ENCODE measurements at regions of chr6 and their contacts with region 1.

Region 1: DNA sequence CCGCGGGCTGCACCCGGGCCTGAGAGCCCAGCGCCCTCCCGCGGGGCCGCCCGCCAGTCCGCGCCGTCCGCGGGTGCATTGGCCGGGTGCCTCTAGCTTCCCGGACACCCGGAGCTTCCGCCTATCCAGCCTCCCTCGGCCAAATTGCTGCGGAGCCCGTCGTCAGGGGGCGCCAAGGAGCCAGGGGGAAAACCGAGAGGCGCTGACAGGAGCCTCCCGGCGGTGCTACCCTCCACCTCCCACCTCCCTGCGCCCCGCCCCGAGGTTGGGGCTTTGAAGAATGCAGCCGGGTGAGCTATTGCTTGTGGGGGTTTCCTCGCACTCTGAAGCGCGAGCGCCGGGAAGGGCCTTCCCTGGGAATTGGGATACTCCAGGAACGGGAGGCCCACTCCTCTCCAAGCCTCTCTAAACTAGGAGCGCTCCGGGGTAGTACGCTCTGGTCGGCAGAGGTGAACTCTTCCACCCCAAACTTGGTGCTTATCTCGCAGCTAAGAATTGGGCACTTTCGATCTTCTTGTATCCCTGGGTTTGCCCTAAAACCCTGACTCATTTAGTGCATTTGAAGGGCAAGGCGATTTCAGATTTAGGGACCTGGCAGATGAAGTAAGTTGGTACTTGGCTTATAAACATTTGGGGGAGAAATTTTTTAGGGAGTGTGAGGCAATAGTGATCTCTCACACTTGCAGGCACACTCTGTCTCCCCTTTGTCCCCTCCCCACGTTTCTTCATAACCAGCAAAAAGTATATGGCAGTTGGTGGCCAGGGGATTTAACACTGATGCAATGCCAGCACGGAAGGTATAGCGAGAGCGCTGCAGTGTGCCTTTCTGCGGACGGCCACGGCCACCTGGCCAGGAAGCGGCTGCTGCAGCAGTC is 501 bp downstream of the BEND6 start:
- DNase-seq: peak in 7 of 9 donors; percentile 8 to 81 (median 19)
- ATAC-seq: peak; percentile 74
- H3K4me3 ChIP-seq: peak overlapping the region; percentile 37
- H3K4me3 Mint-ChIP-seq: peak overlapping the region; percentile 76 to 88 (median 80)
- H3K27ac ChIP-seq: no peak overlapping the region
- H3K27ac Mint-ChIP-seq: peak overlapping the region in 1 of 9 donors; percentile 30
- H3K4me1 ChIP-seq: peaks cover 6 to 16% of the 10 kb centered on the region in 2 donors
- H3K4me1 Mint-ChIP-seq: peaks cover 11 to 26% (median 24%) of the 10 kb centered on the region in 7 donors
- H3K27me3 ChIP-seq: peaks cover 0 to 12% of the 10 kb centered on the region in 2 donors
- H3K27me3 Mint-ChIP-seq: peaks cover 52 to 77% (median 69%) of the 10 kb centered on the region in 5 donors

Region 2: GRCh38 chr6:56902641-56903464 is 52.6 kb before region 1 on chr6:
- CTCF ChIA-PET with region 1: interaction called, 3 read pairs
- POLR2A ChIA-PET with region 1: no interaction called
- intact Hi-C with region 1: loop called in 1 of 2 experiments (anchors 2 kb)
- DNase-seq: peak in 6 of 9 donors; percentile 18 to 44 (median 28)
- ATAC-seq: peak; percentile 61
- H3K4me3 ChIP-seq: no peak overlapping the region
- H3K4me3 Mint-ChIP-seq: no peak overlapping the region
- H3K27ac ChIP-seq: no peak overlapping the region
- H3K27ac Mint-ChIP-seq: no peak overlapping the region
- H3K4me1 ChIP-seq: no peaks in the 10 kb centered on the region
- H3K4me1 Mint-ChIP-seq: no peaks in the 10 kb centered on the region
- H3K27me3 ChIP-seq: no peaks in the 10 kb centered on the region
- H3K27me3 Mint-ChIP-seq: peaks cover 4 to 26% (median 6%) of the 10 kb centered on the region in 5 donors

Region 3: DNA sequence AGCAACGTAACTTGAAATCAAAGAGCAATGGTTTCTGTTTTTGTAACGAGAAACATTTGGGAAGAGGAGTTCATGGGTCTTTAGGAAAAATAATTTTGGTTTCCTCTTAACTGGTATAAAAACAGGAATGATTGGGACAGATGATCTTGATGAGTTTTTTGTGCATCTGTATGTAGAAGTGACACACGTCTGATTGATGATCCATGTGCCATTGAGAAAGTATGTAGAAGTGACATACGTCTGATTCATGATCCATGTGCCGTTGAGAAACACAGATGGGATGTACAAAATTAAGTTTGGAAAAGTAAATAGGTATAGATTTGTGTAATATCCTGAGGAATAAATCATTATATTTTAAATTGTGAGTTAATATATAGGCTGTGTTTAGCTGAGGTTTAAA is 93.2 kb after region 1 on chr6:
- CTCF ChIA-PET with region 1: no interaction called
- POLR2A ChIA-PET with region 1: no interaction called
- intact Hi-C with region 1: loop called in 1 of 2 experiments (anchors 1 kb)
- DNase-seq: no peak
- ATAC-seq: no peak
- H3K4me3 ChIP-seq: no peak overlapping the region
- H3K4me3 Mint-ChIP-seq: peak overlapping the region; percentile 46 to 84 (median 68)
- H3K27ac ChIP-seq: no peak overlapping the region
- H3K27ac Mint-ChIP-seq: peak overlapping the region in 6 of 9 donors; percentile 14 to 75 (median 58)
- H3K4me1 ChIP-seq: peaks cover 0 to 9% of the 10 kb centered on the region in 2 donors
- H3K4me1 Mint-ChIP-seq: peaks cover 21 to 41% (median 32%) of the 10 kb centered on the region in 7 donors
- H3K27me3 ChIP-seq: no peaks in the 10 kb centered on the region
- H3K27me3 Mint-ChIP-seq: peaks cover 0 to 24% (median 0%) of the 10 kb centered on the region in 5 donors

Region 4: GRCh38 chr6:57108691-57109090 is 153.3 kb after region 1 on chr6:
- CTCF ChIA-PET with region 1: no interaction called
- POLR2A ChIA-PET with region 1: no interaction called
- intact Hi-C with region 1: no loop called
- DNase-seq: no peak
- ATAC-seq: no peak
- H3K4me3 ChIP-seq: no peak overlapping the region
- H3K4me3 Mint-ChIP-seq: no peak overlapping the region
- H3K27ac ChIP-seq: no peak overlapping the region
- H3K27ac Mint-ChIP-seq: peak overlapping the region in 1 of 9 donors; percentile 8
- H3K4me1 ChIP-seq: no peaks in the 10 kb centered on the region
- H3K4me1 Mint-ChIP-seq: peaks cover 31 to 69% (median 52%) of the 10 kb centered on the region in 7 donors
- H3K27me3 ChIP-seq: no peaks in the 10 kb centered on the region
- H3K27me3 Mint-ChIP-seq: no peaks in the 10 kb centered on the region

Region 5: DNA sequence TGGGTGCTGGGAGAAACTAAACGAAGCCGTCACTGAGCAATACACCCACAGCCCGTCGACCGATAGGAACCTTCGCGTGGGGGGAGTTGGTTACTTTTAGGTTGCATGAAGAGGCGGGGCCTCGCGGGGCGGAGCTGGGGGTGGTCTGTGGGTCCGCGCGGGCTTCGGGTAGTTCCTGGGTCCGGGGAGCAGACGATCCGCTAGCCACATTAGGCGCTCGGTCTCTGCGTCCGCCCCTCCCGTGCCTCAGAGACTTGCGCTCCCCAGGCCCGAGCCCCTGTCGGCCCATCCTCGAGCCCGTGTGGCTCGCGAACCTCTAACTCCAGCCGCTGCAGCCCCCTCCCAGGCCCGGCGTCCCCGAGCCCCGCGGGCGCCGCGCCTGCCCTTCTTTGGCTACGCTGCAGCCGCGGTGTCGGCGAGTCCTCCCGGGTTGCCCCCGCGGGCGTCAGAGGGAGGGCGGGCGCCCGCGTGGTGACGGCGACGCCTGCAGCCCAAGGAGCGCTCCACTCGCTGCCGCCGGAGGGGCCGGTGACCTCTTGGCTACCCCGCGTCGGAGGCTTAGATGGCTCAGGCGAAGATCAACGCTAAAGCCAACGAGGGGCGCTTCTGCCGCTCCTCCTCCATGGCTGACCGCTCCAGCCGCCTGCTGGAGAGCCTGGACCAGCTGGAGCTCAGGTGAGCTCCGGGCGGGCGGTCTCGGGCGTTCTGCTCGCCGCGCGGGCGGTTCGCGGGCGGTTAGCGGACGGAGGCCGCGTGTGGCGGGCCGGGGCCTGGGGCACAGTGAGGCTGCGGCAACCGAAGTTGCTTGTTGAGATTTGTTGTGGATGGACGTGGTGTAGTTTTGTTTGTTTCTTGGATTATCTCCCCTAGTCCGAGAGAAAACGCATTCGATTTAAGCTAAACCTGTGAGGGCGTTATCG is 217.0 kb after region 1 on chr6 and contains the start of gene BAG2:
- CTCF ChIA-PET with region 1: no interaction called
- POLR2A ChIA-PET with region 1: no interaction called
- intact Hi-C with region 1: loop called (anchors 1 to 5 kb)
- DNase-seq: peak; percentile 75 to 91 (median 85)
- ATAC-seq: peak; percentile 91
- H3K4me3 ChIP-seq: peak within 1 kb of the TSS; percentile 57
- H3K4me3 Mint-ChIP-seq: peak within 1 kb of the TSS; percentile 88 to 99 (median 92)
- H3K27ac ChIP-seq: peak within 1 kb of the TSS; percentile 87
- H3K27ac Mint-ChIP-seq: peak within 1 kb of the TSS; percentile 90 to 99 (median 93)
- H3K4me1 ChIP-seq: peaks cover 4 to 12% of the 10 kb centered on the region in 2 donors
- H3K4me1 Mint-ChIP-seq: peaks cover 10 to 61% (median 56%) of the 10 kb centered on the region in 7 donors
- H3K27me3 ChIP-seq: no peaks in the 10 kb centered on the region
- H3K27me3 Mint-ChIP-seq: no peaks in the 10 kb centered on the region
- total RNA-seq, gene BAG2: 3.7 to 8.1 (median 5.1) TPM

Measured in naive thymus-derived CD4-positive, alpha-beta T cell (primary cell).